Activated T-helper 2 cell treated with anti-CD3 and anti-CD28 coated beads, Interferon-gamma antibody, Interleukin-2, Interleukin-4, amounts not matched to agents 10 μg/mL and 5 μg/mL and 100 μg/mL, durations not matched to agents 14 hours and 24 hours and 36 hours (primary cell): ENCODE measurements at regions of chr3 and their contacts with region 1.

Region 1: DNA sequence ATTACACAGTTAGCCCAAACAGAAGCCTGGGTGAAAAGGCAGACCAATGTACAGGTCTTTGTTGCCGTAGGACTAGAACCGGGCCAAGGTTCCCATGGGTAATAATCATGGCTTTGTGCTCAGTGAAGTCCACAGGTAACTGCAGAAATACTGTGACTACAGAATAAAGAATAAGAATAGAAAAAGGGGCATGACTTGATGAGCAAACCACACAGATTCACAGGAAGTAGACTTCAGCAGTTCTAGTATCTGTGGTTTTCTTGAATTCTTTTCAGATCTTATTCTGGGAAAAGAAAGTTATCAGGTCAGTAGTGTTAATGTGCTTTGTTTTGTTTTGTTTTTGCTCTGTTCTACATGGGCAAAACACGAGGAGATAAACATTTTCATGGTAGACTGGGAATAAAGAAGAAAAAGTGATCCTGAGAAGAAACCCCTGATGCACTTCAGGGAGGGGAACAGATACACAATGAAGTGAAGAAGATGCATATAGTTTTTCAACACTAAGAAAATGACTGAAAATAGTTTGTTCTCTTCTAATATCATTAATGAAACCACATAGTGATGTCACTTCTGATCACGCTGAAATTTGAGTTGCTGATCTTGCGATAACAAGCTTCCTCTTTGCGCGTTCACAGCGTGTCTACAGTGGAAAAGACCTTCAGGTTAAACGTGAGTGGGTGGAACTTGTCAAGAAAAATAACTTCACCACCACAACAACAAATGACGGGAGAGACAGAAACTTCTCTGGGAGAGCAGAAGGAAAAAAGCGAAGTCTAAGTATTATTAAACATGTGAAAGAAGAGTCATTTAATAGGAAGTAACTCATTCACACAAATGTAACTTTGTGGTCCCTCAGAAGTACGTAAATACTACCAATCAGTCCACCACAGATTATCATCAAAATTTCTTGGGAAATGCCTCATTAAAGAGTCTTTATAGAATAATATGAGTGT is 315.8 kb upstream of the SATB1 start:
- DNase-seq: peak; percentile 61
- H3K4me3 Mint-ChIP-seq: peak overlapping the region; percentile 53
- H3K27ac Mint-ChIP-seq: peak overlapping the region; percentile 90
- H3K4me1 Mint-ChIP-seq: peaks cover 85% of the 10 kb centered on the region
- H3K27me3 Mint-ChIP-seq: no peaks in the 10 kb centered on the region

Region 2: DNA sequence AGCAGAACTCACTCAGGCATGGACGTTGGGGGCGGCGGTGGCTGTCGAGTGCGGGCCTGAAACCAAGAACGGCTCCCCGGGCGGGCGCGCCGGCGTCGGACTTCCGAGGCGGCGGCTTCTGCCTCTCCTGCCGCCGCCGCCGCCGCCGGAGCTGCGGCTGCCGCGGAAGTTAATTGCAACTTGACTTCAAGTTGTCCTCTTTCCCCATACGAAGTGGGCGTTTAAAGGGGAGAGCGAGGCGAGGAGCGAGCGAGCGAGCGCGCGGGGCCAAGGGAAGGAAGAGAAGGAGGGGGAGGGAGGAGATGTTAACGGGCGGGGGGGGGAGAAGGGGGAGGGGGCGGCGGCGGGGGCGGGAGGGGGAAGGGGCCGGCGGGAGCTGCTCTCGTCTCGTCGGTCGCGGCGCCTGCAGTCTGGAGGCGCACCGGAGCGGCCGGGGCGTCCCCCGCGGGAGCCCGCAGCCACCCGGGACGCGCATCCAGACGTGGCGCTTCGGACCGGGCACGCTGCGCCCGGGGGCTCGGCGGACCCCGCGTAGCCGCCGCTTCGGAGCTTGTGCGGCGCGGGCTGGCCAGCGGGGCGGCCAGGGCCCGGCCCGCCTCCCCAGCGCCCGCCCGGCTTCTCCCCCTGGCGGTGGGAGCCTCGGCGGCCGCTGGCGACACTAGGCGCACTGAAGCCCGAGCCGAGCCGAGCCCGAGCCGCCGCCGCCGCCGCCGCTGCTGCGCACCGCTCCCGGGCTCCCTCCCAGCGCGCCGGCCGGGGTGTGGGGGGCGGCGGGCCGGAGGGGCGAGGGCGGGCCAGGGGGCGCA is 296.1 kb before region 1 on chr3:
- intact Hi-C with region 1: loop called (anchors 1 kb)
- DNase-seq: peak; percentile 77
- H3K4me3 Mint-ChIP-seq: peak overlapping the region; percentile 97
- H3K27ac Mint-ChIP-seq: peak overlapping the region; percentile 97
- H3K4me1 Mint-ChIP-seq: peaks cover 31% of the 10 kb centered on the region
- H3K27me3 Mint-ChIP-seq: no peaks in the 10 kb centered on the region

Region 3: GRCh38 chr3:18679238-18679637 is 61.7 kb before region 1 on chr3:
- intact Hi-C with region 1: loop called (anchors 1 kb)
- DNase-seq: peak; percentile 55
- H3K4me3 Mint-ChIP-seq: peak overlapping the region; percentile 35
- H3K27ac Mint-ChIP-seq: peak overlapping the region; percentile 65
- H3K4me1 Mint-ChIP-seq: peaks cover 76% of the 10 kb centered on the region
- H3K27me3 Mint-ChIP-seq: no peaks in the 10 kb centered on the region

Region 4: GRCh38 chr3:18752273-18752934 is 11.5 kb after region 1 on chr3:
- intact Hi-C with region 1: loop called (anchors 1 kb)
- DNase-seq: no peak
- H3K4me3 Mint-ChIP-seq: no peak overlapping the region
- H3K27ac Mint-ChIP-seq: peak overlapping the region; percentile 2
- H3K4me1 Mint-ChIP-seq: peaks cover 70% of the 10 kb centered on the region
- H3K27me3 Mint-ChIP-seq: no peaks in the 10 kb centered on the region

Region 5: GRCh38 chr3:18786650-18787323 is 45.9 kb after region 1 on chr3:
- intact Hi-C with region 1: no loop called
- DNase-seq: no peak
- H3K4me3 Mint-ChIP-seq: no peak overlapping the region
- H3K27ac Mint-ChIP-seq: peak overlapping the region; percentile 4
- H3K4me1 Mint-ChIP-seq: peaks cover 9% of the 10 kb centered on the region
- H3K27me3 Mint-ChIP-seq: no peaks in the 10 kb centered on the region

Region 6: GRCh38 chr3:18872466-18872865 is 131.6 kb after region 1 on chr3:
- intact Hi-C with region 1: loop called (anchors 1 kb)
- DNase-seq: no peak
- H3K4me3 Mint-ChIP-seq: no peak overlapping the region
- H3K27ac Mint-ChIP-seq: no peak overlapping the region
- H3K4me1 Mint-ChIP-seq: peaks cover 43% of the 10 kb centered on the region
- H3K27me3 Mint-ChIP-seq: no peaks in the 10 kb centered on the region

Region 7: GRCh38 chr3:20185701-20186598 is 1445.0 kb after region 1 on chr3 and contains the start of gene SGO1:
- intact Hi-C with region 1: no loop called
- DNase-seq: peak; percentile 99
- H3K4me3 Mint-ChIP-seq: no peak within 1 kb of the TSS
- H3K27ac Mint-ChIP-seq: no peak within 1 kb of the TSS
- H3K4me1 Mint-ChIP-seq: peaks cover 7% of the 10 kb centered on the region
- H3K27me3 Mint-ChIP-seq: peaks cover 4% of the 10 kb centered on the region
- total RNA-seq, gene SGO1: 19.2 and 20.8 TPM in 2 replicates